Activated B cell treated with CpG ODN at 0.5 μM for 24 hours (primary cell): ENCODE measurements at regions of chr15 and their contacts with region 1.

Region 1: DNA sequence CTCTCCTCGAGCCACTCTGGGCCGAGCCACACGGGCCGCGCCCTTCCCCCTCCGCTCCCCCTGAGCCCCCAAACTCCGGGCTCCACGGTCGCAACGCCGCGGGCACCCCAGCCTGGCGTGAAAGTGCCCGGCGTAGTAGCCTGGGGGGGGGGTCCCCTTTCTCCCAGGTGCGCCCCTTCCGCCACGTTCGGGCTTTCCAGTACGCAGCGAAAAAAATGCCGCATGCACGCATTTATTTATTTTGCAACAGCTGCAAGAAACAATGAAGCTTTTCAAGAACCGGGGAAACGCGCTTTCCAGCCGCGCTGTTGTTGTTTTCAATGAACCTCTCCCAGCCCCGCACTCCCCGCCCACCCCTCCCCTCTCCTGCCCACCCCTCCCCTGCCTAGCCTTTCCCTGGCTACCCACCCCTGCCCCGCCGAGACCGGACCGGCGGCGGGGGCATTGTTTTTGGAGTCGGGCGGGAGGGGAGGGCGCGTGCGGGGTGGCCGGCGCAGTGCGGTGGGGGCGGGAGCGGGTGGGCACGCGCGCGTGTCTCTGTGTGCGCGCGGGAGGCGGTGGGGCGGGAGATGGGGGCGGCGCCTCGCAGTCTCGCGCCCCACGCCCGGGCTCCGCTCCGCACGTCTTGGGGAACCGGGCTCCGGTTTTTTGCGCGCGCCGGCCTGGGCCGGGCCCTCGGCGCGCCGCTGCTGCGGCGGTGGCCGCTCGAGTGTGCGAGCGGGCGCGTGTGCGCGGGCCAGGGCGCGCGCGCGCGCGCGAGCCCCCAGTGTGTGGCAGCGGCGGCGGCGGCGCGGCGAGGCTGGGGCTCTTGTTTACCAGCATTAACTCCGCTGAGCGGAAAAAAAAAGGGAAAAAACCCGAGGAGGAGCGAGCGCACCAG is at the start of gene IGF1R:
- DNase-seq: peak; percentile 88
- ATAC-seq: peak; percentile 83
- H3K4me3 Mint-ChIP-seq: peak within 1 kb of the TSS; percentile 87
- H3K27ac Mint-ChIP-seq: peak within 1 kb of the TSS; percentile 76
- H3K4me1 Mint-ChIP-seq: peaks cover 22% of the 10 kb centered on the region
- H3K27me3 Mint-ChIP-seq: peaks cover 26% of the 10 kb centered on the region
- CTCF ChIP-seq: no peak
- total RNA-seq, gene IGF1R: 5.9 and 6.7 TPM in 2 replicates

Region 2: DNA sequence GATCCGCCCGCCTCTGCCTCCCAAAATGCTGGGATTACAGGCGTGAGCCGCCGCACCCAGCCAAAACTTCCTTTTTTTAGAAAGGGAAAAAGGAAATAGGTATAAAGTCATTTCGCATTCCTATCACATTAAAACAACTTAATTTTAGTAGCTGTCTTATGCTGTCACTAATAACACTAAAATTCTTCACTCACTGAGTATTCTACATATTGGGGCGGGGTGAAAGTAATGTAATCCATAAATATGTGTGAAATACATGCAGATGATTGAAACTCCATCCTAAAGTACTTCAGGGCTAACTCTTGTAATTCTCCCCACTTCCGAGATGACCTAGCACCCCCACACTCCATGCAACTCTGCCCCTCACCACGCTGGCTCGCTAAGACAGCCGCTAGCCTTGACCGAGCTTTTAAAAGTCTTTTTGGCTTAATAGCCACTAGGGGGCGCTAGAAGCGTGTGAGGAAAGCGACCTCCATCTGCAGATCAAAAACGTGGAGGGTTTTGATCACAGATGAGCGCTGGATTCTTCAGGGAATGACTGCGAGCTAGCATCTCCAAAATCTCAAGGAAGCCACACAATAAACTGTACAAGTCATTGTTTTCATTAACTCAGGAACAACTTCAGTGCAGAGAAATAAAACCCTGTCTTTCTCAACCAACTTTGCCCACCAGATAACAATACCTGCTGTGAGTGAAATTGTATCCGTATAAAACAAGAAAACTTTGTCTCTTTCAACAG is 129.0 kb before region 1 on chr15:
- CTCF ChIA-PET with region 1: interaction called, 12 read pairs
- POLR2A ChIA-PET with region 1: no interaction called
- intact Hi-C with region 1: loop called (anchors 2 kb)
- DNase-seq: no peak
- ATAC-seq: peak; percentile 49
- H3K4me3 Mint-ChIP-seq: no peak overlapping the region
- H3K27ac Mint-ChIP-seq: no peak overlapping the region
- H3K4me1 Mint-ChIP-seq: peaks cover 3% of the 10 kb centered on the region
- H3K27me3 Mint-ChIP-seq: peaks cover 4% of the 10 kb centered on the region
- CTCF ChIP-seq: peak; percentile 53

Region 3: GRCh38 chr15:98599909-98600691 is 47.9 kb before region 1 on chr15:
- CTCF ChIA-PET with region 1: no interaction called
- POLR2A ChIA-PET with region 1: interaction called, 4 read pairs
- intact Hi-C with region 1: loop called (anchors 2 kb)
- DNase-seq: peak; percentile 24
- ATAC-seq: peak; percentile 77
- H3K4me3 Mint-ChIP-seq: peak overlapping the region; percentile 89
- H3K27ac Mint-ChIP-seq: peak overlapping the region; percentile 91
- H3K4me1 Mint-ChIP-seq: peaks cover 10% of the 10 kb centered on the region
- H3K27me3 Mint-ChIP-seq: peaks cover 2% of the 10 kb centered on the region
- CTCF ChIP-seq: no peak

Region 4: GRCh38 chr15:98779463-98780071 is 131.6 kb after region 1 on chr15:
- CTCF ChIA-PET with region 1: no interaction called
- POLR2A ChIA-PET with region 1: interaction called, 3 read pairs
- intact Hi-C with region 1: loop called (anchors 5 kb)
- DNase-seq: peak; percentile 60
- ATAC-seq: peak; percentile 81
- H3K4me3 Mint-ChIP-seq: no peak overlapping the region
- H3K27ac Mint-ChIP-seq: no peak overlapping the region
- H3K4me1 Mint-ChIP-seq: peaks cover 25% of the 10 kb centered on the region
- H3K27me3 Mint-ChIP-seq: peaks cover 17% of the 10 kb centered on the region
- CTCF ChIP-seq: no peak

Region 5: DNA sequence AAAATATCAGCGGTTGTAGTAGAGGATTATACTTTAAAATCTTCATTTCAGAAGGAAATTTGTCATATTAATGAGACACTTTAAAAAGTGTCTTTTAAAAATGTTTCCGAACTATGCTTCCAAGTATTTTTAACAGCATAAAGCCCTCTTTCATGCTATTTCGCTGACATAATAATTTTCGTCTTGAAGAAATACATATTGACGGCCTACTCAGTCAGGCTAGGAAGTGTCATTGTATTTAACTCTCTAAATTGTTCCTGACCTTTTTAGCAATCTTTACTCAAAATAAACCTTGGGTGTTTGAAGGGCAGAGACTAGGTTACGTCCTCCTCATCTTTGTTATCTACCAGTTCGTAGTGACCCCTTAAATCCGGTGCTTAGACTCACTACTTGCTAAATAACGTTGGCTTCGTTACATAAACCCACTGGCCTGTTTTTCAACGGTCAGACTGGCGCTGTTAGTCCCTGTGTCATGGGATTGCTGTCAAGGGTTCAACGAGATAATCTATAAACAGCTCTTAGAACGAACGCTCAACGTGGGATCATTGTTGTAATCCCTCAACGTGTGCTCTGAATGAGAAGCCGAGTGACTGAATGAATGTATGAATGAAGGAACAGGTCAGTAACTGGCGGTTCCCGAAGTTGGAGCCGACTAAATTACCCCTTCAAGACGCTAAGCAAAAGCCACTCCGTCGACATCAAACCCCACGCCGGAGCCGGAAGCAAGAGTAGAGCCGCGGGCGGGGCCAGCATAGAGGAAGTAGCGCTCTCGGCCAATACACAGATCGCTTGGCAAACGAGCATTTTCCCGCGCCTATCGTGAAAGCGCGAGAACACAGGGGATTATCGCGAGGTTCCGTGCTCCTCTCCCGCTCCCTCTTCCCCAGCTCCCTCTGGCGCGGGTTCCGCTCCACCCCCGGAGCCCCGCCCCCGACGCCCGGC is 602.8 kb after region 1 on chr15:
- CTCF ChIA-PET with region 1: no interaction called
- POLR2A ChIA-PET with region 1: no interaction called
- intact Hi-C with region 1: loop called (anchors 2 kb)
- DNase-seq: peak; percentile 85
- ATAC-seq: peak; percentile 97
- H3K4me3 Mint-ChIP-seq: peak overlapping the region; percentile 91
- H3K27ac Mint-ChIP-seq: peak overlapping the region; percentile 89
- H3K4me1 Mint-ChIP-seq: peaks cover 29% of the 10 kb centered on the region
- H3K27me3 Mint-ChIP-seq: no peaks in the 10 kb centered on the region
- CTCF ChIP-seq: no peak

Region 6: GRCh38 chr15:100349696-100350433 is 1701.9 kb after region 1 on chr15:
- CTCF ChIA-PET with region 1: no interaction called
- POLR2A ChIA-PET with region 1: no interaction called
- intact Hi-C with region 1: loop called (anchors 10 kb)
- DNase-seq: peak; percentile 69
- ATAC-seq: peak; percentile 92
- H3K4me3 Mint-ChIP-seq: peak overlapping the region; percentile 90
- H3K27ac Mint-ChIP-seq: peak overlapping the region; percentile 46
- H3K4me1 Mint-ChIP-seq: peaks cover 10% of the 10 kb centered on the region
- H3K27me3 Mint-ChIP-seq: peaks cover 10% of the 10 kb centered on the region
- CTCF ChIP-seq: peak; percentile 19